Activated T-helper 1 cell treated with anti-CD3 and anti-CD28 coated beads, Interleukin-12 subunit alpha, Interleukin-12 subunit beta, Interleukin-2, Interleukin-4 antibody, amounts not matched to agents 30 ng/mL and 10 ng/mL and 1 ng/mL, durations not matched to agents 14 hours and 24 hours and 36 hours (primary cell): ENCODE measurements at regions of chr13 and their contacts with region 1.

Region 1: GRCh38 chr13:46354156-46355091 is 32.6 kb downstream of the RUBCNL start:
- DNase-seq: peak; percentile 53
- H3K4me3 Mint-ChIP-seq: peak overlapping the region; percentile 3
- H3K27ac Mint-ChIP-seq: peak overlapping the region; percentile 93
- H3K4me1 Mint-ChIP-seq: peaks cover 22% of the 10 kb centered on the region
- H3K27me3 Mint-ChIP-seq: no peaks in the 10 kb centered on the region

Region 2: GRCh38 chr13:46295491-46296114 is 58.8 kb before region 1 on chr13:
- intact Hi-C with region 1: loop called (anchors 2 kb)
- DNase-seq: peak; percentile 48
- H3K4me3 Mint-ChIP-seq: peak overlapping the region; percentile 66
- H3K27ac Mint-ChIP-seq: peak overlapping the region; percentile 95
- H3K4me1 Mint-ChIP-seq: peaks cover 46% of the 10 kb centered on the region
- H3K27me3 Mint-ChIP-seq: no peaks in the 10 kb centered on the region

Region 3: GRCh38 chr13:46341112-46341711 is 13.2 kb before region 1 on chr13:
- intact Hi-C with region 1: loop called (anchors 1 kb)
- DNase-seq: no peak
- H3K4me3 Mint-ChIP-seq: peak overlapping the region; percentile 60
- H3K27ac Mint-ChIP-seq: peak overlapping the region; percentile 97
- H3K4me1 Mint-ChIP-seq: peaks cover 48% of the 10 kb centered on the region
- H3K27me3 Mint-ChIP-seq: no peaks in the 10 kb centered on the region

Region 4: GRCh38 chr13:46387064-46387851 is 32.8 kb after region 1 on chr13 and contains the start of gene RUBCNL:
- intact Hi-C with region 1: loop called (anchors 1 kb)
- DNase-seq: peak; percentile 13
- H3K4me3 Mint-ChIP-seq: peak within 1 kb of the TSS; percentile 87
- H3K27ac Mint-ChIP-seq: peak within 1 kb of the TSS; percentile 15
- H3K4me1 Mint-ChIP-seq: peaks cover 40% of the 10 kb centered on the region
- H3K27me3 Mint-ChIP-seq: peaks cover 23% of the 10 kb centered on the region
- total RNA-seq, gene RUBCNL: 1.2 and 2.8 TPM in 2 replicates

Region 5: GRCh38 chr13:46392967-46393366 is 38.5 kb after region 1 on chr13:
- intact Hi-C with region 1: loop called (anchors 1 kb)
- DNase-seq: no peak
- H3K4me3 Mint-ChIP-seq: no peak overlapping the region
- H3K27ac Mint-ChIP-seq: no peak overlapping the region
- H3K4me1 Mint-ChIP-seq: peaks cover 38% of the 10 kb centered on the region
- H3K27me3 Mint-ChIP-seq: peaks cover 8% of the 10 kb centered on the region

Region 6: GRCh38 chr13:46655377-46656180 is 301.2 kb after region 1 on chr13:
- intact Hi-C with region 1: loop called (anchors 10 kb)
- DNase-seq: no peak
- H3K4me3 Mint-ChIP-seq: peak overlapping the region; percentile 35
- H3K27ac Mint-ChIP-seq: peak overlapping the region; percentile 38
- H3K4me1 Mint-ChIP-seq: peaks cover 35% of the 10 kb centered on the region
- H3K27me3 Mint-ChIP-seq: no peaks in the 10 kb centered on the region